Calu3 (cell line): ENCODE measurements at regions of chr14 and their contacts with region 1.

Region 1: GRCh38 chr14:78836777-78837176 is 666.6 kb downstream of the NRXN3 start:
- DNase-seq: peak; percentile 78
- H3K4me3 Mint-ChIP-seq: no peak overlapping the region
- H3K27ac Mint-ChIP-seq: no peak overlapping the region
- H3K4me1 Mint-ChIP-seq: no peaks in the 10 kb centered on the region
- H3K27me3 Mint-ChIP-seq: peaks cover 58% of the 10 kb centered on the region
- CTCF ChIP-seq: peak; percentile 73

Region 2: DNA sequence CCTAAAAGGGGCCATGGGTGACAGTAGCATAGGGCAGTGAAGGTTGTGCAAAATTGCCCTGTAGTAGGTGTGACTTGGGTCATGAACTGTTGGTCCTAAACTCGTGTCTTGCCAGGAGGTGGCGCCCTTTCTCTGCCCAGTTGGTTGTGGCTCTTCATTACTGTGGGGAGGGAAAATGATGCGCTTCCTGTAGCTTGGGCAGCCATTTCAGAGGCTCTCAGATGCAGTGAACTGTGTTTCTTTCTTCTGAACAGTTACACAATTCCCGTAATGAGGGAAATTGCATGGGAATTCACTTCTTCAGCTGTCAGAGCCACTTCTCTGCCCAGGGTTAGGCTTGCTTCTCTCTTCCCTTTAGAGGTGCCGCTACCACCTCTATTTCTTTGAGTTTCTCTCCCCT is 814.7 kb before region 1 on chr14:
- CTCF ChIA-PET with region 1: no interaction called
- intact Hi-C with region 1: loop called (anchors 2 kb)
- DNase-seq: peak; percentile 82
- H3K4me3 Mint-ChIP-seq: no peak overlapping the region
- H3K27ac Mint-ChIP-seq: no peak overlapping the region
- H3K4me1 Mint-ChIP-seq: no peaks in the 10 kb centered on the region
- H3K27me3 Mint-ChIP-seq: no peaks in the 10 kb centered on the region
- CTCF ChIP-seq: peak; percentile 68

Region 3: DNA sequence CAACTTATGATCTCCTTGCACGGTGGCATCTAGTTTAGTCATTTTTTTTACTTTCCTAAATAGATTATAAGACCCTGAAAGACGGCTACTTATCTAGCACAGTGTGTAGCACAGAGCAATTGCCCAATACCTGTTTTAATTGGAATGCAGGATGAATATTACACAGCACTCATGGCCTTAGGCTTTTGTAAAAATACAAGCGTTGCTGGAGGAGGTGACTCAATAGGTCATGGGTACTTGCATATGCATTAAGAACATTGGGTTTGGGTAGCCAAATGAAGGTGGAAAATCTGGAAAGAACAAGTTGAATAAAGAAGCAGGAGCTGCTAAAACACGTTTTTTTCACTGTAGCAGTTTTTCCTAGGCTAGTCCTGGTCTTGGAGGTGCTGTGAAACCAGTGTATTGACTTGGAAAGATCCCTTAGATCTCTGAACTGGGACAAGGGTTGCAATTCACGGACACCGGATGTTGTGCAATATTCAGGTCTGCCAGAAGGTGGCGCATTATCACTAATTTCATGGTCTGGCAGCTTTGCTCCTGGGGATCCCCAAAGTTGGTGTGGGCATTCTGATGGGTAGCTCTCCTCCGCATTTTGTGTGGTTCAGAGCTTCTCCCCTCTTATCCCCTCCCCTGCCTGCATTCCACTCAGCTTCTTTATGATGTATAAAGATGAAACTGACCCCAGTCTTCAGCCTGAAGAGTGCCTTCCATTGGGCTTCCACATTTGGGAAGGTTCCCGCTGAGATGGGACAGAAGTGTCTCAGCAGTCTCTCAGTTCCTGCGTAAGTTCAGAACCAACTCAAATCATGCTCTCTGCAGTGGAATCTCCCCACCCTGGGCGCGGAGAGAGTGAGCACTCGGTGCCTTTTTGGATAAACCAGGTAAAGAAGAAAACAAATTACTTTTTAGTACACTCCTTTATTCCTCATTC is 388.3 kb before region 1 on chr14:
- CTCF ChIA-PET with region 1: no interaction called
- intact Hi-C with region 1: loop called (anchors 1 kb)
- DNase-seq: peak; percentile 68
- H3K4me3 Mint-ChIP-seq: no peak overlapping the region
- H3K27ac Mint-ChIP-seq: no peak overlapping the region
- H3K4me1 Mint-ChIP-seq: no peaks in the 10 kb centered on the region
- H3K27me3 Mint-ChIP-seq: peaks cover 25% of the 10 kb centered on the region
- CTCF ChIP-seq: peak; percentile 57

Region 4: DNA sequence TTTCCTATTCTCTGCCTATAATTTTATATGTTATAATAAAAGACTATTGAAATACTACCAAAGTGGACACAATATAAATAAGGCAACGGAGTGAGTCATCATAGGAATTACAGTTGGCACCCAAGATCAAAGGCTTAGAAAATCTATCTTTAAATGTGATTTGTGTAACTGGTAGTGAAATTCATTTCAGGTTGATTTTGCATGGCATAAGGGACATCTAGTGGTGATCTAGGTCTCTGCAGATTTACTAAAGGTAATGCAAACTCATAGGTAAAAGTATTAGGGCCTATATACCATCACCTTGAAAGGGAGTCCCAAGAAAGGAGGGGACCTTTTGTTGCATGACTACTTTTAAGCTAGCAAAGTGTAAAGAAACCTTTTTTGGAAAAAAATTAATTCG is 139.4 kb before region 1 on chr14:
- CTCF ChIA-PET with region 1: interaction called, 4 read pairs
- intact Hi-C with region 1: loop called (anchors 2 kb)
- DNase-seq: no peak
- H3K4me3 Mint-ChIP-seq: no peak overlapping the region
- H3K27ac Mint-ChIP-seq: no peak overlapping the region
- H3K4me1 Mint-ChIP-seq: no peaks in the 10 kb centered on the region
- H3K27me3 Mint-ChIP-seq: peaks cover 25% of the 10 kb centered on the region
- CTCF ChIP-seq: no peak

Region 5: GRCh38 chr14:78790271-78790670 is 46.5 kb before region 1 on chr14:
- CTCF ChIA-PET with region 1: no interaction called
- intact Hi-C with region 1: loop called (anchors 2 kb)
- DNase-seq: no peak
- H3K4me3 Mint-ChIP-seq: no peak overlapping the region
- H3K27ac Mint-ChIP-seq: no peak overlapping the region
- H3K4me1 Mint-ChIP-seq: no peaks in the 10 kb centered on the region
- H3K27me3 Mint-ChIP-seq: no peaks in the 10 kb centered on the region
- CTCF ChIP-seq: no peak